Common myeloid progenitor, CD34-positive (primary cell): ENCODE measurements at regions of chr11 and their contacts with region 1.

Region 1: GRCh38 chr11:105862736-105863367 is 159.2 kb downstream of the MSANTD4 start:
- DNase-seq: peak; percentile 49 to 71 (median 61)
- H3K4me3 ChIP-seq: no peak overlapping the region
- H3K27ac ChIP-seq: no peak overlapping the region
- H3K4me1 ChIP-seq: no peaks in the 10 kb centered on the region
- H3K27me3 ChIP-seq: no peaks in the 10 kb centered on the region

Region 2: DNA sequence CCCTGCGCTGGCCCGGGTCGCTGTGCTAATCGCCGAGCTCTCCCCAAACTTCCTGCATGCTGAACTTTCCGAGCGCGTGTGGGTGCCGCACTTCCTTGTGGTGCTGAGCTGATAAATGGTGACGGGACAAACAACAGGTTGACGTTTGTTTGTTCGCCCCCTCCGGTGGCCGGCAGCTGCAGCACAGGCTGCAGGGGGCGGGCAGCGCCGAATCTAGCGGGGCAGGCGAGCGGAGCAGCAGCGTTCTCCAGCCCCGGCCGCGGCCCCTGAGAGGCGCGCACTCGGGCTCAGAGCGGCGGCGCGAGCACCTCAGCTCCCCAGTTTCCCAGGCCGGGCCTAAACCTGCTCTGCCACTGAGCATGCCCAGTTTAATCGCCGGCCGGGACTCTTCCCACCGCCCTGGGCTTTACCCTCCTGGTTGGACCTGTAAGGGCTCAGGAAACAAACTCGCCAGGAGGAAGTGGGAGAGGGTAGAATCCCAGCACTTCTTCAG is 1698.8 kb before region 1 on chr11 and contains the start of gene PDGFD:
- CTCF ChIA-PET with region 1: interaction called, 10 read pairs
- POLR2A ChIA-PET with region 1: no interaction called
- DNase-seq: peak; percentile 93 to 97 (median 94)
- H3K4me3 ChIP-seq: peak within 1 kb of the TSS; percentile 59 to 95 (median 84)
- H3K27ac ChIP-seq: no peak within 1 kb of the TSS
- H3K4me1 ChIP-seq: peaks cover 3 to 19% (median 13%) of the 10 kb centered on the region in 4 experiments
- H3K27me3 ChIP-seq: no peaks in the 10 kb centered on the region

Region 3: GRCh38 chr11:104609311-104610085 is 1253.4 kb before region 1 on chr11:
- CTCF ChIA-PET with region 1: interaction called, 10 read pairs
- POLR2A ChIA-PET with region 1: no interaction called
- DNase-seq: peak; percentile 47 to 71 (median 70)
- H3K4me3 ChIP-seq: no peak overlapping the region
- H3K27ac ChIP-seq: no peak overlapping the region
- H3K4me1 ChIP-seq: peaks cover 0 to 10% (median 4%) of the 10 kb centered on the region in 4 experiments
- H3K27me3 ChIP-seq: no peaks in the 10 kb centered on the region

Region 4: DNA sequence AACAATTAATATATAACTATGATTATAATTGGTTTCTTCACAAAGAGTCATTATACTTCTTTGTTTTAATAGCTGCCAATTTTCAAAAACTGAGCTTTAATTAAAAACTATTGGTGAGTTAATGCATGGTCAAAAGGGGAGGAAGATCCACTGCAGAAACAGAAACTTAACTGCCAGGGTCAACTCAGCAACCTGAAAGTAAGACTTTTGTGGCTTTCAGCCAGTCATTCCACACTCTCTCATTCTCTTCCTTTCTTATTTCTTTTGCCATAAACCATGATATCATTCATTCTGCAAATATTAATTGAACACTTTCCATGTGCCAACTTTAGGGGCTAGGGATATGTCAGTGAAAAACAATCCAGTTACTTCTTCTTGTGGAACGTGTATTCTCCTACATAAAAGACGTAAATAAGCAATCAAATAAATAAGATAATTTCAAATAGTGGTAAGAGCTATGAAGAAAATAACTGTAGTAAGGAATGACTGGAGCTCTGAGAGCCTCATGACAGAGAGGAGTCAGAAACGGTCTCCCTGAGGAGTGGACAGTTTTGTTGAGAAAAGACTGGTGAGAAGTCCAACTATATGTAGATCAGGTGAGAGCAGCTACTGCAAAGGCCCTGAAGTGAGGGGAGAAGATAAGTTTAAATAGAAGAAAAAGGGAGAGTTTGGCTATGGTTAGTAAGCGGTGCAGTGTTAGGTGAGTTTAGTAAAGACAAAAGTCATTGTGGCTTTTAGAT is 122.5 kb before region 1 on chr11:
- CTCF ChIA-PET with region 1: no interaction called
- POLR2A ChIA-PET with region 1: no interaction called
- DNase-seq: no peak
- H3K4me3 ChIP-seq: no peak overlapping the region
- H3K27ac ChIP-seq: no peak overlapping the region
- H3K4me1 ChIP-seq: no peaks in the 10 kb centered on the region
- H3K27me3 ChIP-seq: no peaks in the 10 kb centered on the region

Region 5: GRCh38 chr11:105774899-105775298 is 88.0 kb before region 1 on chr11:
- CTCF ChIA-PET with region 1: no interaction called
- POLR2A ChIA-PET with region 1: no interaction called
- DNase-seq: no peak
- H3K4me3 ChIP-seq: no peak overlapping the region
- H3K27ac ChIP-seq: no peak overlapping the region
- H3K4me1 ChIP-seq: no peaks in the 10 kb centered on the region
- H3K27me3 ChIP-seq: no peaks in the 10 kb centered on the region

Region 6: GRCh38 chr11:105852403-105852802 is 10.4 kb before region 1 on chr11:
- CTCF ChIA-PET with region 1: interaction called, 11 read pairs
- POLR2A ChIA-PET with region 1: no interaction called
- DNase-seq: no peak
- H3K4me3 ChIP-seq: no peak overlapping the region
- H3K27ac ChIP-seq: no peak overlapping the region
- H3K4me1 ChIP-seq: no peaks in the 10 kb centered on the region
- H3K27me3 ChIP-seq: no peaks in the 10 kb centered on the region

Region 7: GRCh38 chr11:105910095-105910715 is 47.4 kb after region 1 on chr11:
- CTCF ChIA-PET with region 1: no interaction called
- POLR2A ChIA-PET with region 1: no interaction called
- DNase-seq: no peak
- H3K4me3 ChIP-seq: no peak overlapping the region
- H3K27ac ChIP-seq: no peak overlapping the region
- H3K4me1 ChIP-seq: no peaks in the 10 kb centered on the region
- H3K27me3 ChIP-seq: no peaks in the 10 kb centered on the region

Region 8: DNA sequence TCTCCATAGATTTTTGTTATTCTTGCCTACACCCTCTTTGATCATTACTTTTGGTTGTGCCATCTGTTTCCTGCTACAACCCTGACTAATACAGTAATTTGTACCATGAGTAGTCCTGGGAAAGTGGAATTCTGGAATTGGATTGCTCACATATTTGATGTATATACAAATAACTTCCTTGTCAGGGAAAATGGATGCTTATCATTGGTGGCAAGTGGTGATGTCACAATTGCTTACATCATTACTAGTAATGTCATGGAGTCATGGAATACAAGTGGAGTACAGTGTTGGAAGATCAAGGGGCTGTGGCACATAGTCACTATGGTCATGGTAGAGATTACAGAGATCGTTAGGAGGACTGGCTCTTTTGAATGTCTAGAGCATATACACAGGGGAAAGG is 239.0 kb after region 1 on chr11:
- CTCF ChIA-PET with region 1: no interaction called
- POLR2A ChIA-PET with region 1: no interaction called
- DNase-seq: no peak
- H3K4me3 ChIP-seq: no peak overlapping the region
- H3K27ac ChIP-seq: no peak overlapping the region
- H3K4me1 ChIP-seq: no peaks in the 10 kb centered on the region
- H3K27me3 ChIP-seq: peaks cover 0 to 1% (median 0%) of the 10 kb centered on the region in 5 experiments